ENCODE measurements at regions of chr19 and their contacts with region 1.

Region 1: GRCh38 chr19:34232566-34233481 is 21.5 kb upstream of the GARRE1 start:
- DNase-seq: peak; percentile 30 to 56 (median 46)
- ATAC-seq: peak; percentile 70
- H3K4me3 ChIP-seq: no peak overlapping the region
- H3K27ac ChIP-seq: peak overlapping the region; percentile 40 to 73 (median 56)
- H3K4me1 ChIP-seq: peaks cover 7% of the 10 kb centered on the region
- H3K27me3 ChIP-seq: no peaks in the 10 kb centered on the region
- CTCF ChIP-seq: no peak
- POLR2A ChIP-seq: no peak

Region 2: DNA sequence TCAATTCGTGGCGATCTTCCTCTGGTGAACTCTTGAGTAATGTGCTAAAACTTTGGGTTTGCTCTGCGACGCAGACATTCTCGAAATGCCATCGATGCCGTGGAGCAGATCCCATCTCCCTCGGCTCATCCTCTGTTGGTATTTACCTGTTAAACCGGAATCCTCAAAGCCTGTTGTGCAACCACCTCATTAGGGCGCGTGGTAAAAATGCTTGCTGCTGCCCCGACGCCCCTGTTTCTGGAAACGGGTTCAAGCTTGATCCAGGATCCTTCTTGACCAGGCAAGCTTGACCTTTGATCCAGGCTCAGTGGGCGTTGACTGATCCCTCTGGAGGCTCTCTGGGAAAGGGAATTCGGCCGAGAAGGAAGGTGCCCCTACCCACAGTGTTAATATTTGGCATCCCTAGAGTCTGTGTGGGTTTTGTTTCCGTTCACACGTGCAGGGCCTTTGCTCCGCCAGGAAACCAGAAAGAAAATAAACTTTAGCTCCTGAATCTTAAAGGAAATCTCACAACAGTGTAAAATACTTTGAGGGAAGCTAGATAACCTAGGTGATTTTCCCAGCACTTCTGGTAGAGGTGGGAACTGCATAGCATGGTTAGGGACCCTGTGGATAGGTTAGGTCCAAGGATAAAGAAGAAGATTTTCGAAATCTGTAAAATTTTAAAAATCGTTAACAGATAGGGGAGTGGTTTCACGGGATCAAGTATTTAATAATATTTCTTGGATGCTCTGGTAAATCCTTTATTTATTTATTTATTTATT is 59.4 kb before region 1 on chr19:
- intact Hi-C with region 1: no loop called
- DNase-seq: peak; percentile 35 to 49 (median 41)
- ATAC-seq: peak; percentile 13
- H3K4me3 ChIP-seq: peak overlapping the region; percentile 67 to 98
- H3K27ac ChIP-seq: peak overlapping the region; percentile 96 to 99 (median 99)
- H3K4me1 ChIP-seq: peaks cover 59% of the 10 kb centered on the region
- H3K27me3 ChIP-seq: no peaks in the 10 kb centered on the region
- CTCF ChIP-seq: no peak
- POLR2A ChIP-seq: no peak

Region 3: DNA sequence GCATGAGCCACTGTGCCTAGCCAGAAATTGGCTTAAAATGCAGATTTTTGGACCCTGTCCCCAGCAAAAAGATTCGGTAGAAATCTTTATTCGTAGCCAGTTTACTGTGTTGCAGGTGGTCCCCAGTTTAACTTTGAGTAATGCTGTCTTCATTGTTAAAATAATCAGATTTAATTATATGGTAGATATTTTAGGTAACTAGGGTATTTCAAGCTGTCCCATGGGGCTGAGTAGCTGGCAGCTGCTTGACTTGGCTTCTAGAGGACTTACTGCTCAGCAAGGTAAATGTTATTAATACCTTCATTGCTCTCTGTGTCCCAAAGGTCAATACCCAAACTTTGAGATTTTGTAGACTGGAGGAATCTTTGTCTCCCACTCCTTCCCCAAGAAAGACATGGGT is 39.4 kb before region 1 on chr19:
- intact Hi-C with region 1: no loop called
- DNase-seq: no peak
- ATAC-seq: no peak
- H3K4me3 ChIP-seq: no peak overlapping the region
- H3K27ac ChIP-seq: no peak overlapping the region
- H3K4me1 ChIP-seq: peaks cover 26% of the 10 kb centered on the region
- H3K27me3 ChIP-seq: no peaks in the 10 kb centered on the region
- CTCF ChIP-seq: no peak
- POLR2A ChIP-seq: no peak

Region 4: GRCh38 chr19:34345947-34346351 is 113.1 kb after region 1 on chr19:
- intact Hi-C with region 1: loop called (anchors 10 kb)
- DNase-seq: peak; percentile 63 to 79 (median 70)
- ATAC-seq: peak; percentile 78
- H3K4me3 ChIP-seq: no peak overlapping the region
- H3K27ac ChIP-seq: no peak overlapping the region
- H3K4me1 ChIP-seq: no peaks in the 10 kb centered on the region
- H3K27me3 ChIP-seq: no peaks in the 10 kb centered on the region
- CTCF ChIP-seq: peak; percentile 66 to 83 (median 74)
- POLR2A ChIP-seq: no peak